GM12878 (cell line): ENCODE measurements at regions of chr7 and their contacts with region 1.

Region 1: DNA sequence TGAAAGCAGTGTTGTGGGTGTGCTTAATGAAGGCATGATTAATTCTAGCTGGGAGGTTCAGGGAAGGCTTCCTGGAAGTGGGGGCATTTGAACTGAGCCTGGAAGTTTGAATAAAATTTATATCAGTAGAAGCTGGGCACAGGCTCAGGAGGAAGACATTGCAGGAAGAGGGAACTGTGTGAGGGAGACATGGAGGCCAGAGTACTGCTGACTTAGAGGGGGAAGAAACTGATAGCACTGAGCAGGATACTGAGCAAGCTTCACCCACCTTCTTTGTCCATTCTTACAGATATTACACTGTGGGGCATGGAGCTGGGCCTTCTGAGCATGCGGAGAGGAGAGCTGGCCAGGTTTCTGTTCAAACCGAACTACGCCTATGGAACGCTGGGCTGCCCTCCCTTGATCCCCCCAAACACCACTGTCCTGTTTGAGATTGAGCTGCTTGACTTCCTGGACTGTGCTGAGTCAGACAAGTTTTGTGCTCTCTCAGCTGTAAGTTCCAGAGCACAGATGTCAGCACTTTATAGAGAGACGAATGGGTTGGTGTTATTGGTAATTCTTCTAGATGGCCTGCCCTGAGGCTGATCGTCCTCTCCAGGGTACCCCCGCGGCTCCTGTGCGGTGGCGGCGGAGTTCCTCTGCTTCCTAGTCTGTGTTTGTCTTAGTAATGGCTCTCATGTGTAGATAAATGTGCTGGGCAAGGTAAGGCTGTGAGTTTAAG is 2.1 kb downstream of the FKBP6 start:
- DNase-seq: no peak
- ATAC-seq: no peak
- H3K4me3 ChIP-seq: no peak overlapping the region
- H3K27ac ChIP-seq: no peak overlapping the region
- H3K4me1 ChIP-seq: no peaks in the 10 kb centered on the region
- H3K27me3 ChIP-seq: peaks cover 0 to 3% of the 10 kb centered on the region in 2 experiments; a peak in 2 of 4 replicates
- CTCF ChIP-seq: no peak
- EP300 ChIP-seq: no peak
- POLR2A ChIP-seq: no peak
- RAD21 ChIP-seq: no peak

Region 2: DNA sequence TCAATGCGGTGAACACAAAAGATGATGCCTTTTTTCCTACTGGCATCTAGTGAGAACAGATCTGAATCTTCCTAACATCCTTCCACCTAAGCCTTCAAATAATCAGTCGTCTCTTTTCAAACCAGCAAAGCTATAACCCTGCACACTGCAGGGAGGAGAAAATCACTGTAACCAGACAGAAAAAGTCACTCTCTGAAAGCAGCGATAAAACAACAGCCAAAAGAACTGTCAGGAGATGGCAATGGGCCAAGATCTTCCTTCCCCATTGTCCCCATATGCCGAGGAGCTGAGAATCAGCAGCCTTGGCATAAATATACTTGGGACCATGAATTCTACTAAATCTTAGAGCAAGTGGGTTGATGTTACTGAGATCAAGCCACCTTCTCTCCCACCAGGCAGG is 116.7 kb after region 1 on chr7:
- CTCF ChIA-PET with region 1: interaction called, 33 read pairs
- POLR2A ChIA-PET with region 1: no interaction called
- RAD21 ChIA-PET with region 1: interaction called, 3 read pairs
- SMC1A ChIA-PET with region 1: interaction called, 15 read pairs
- in situ Hi-C with region 1: no loop called
- intact Hi-C with region 1: no loop called
- DNase-seq: no peak
- ATAC-seq: no peak
- H3K4me3 ChIP-seq: no peak overlapping the region
- H3K27ac ChIP-seq: no peak overlapping the region
- H3K4me1 ChIP-seq: no peaks in the 10 kb centered on the region
- H3K27me3 ChIP-seq: no peaks in the 10 kb centered on the region
- CTCF ChIP-seq: no peak
- EP300 ChIP-seq: no peak
- POLR2A ChIP-seq: no peak
- RAD21 ChIP-seq: no peak

Region 3: DNA sequence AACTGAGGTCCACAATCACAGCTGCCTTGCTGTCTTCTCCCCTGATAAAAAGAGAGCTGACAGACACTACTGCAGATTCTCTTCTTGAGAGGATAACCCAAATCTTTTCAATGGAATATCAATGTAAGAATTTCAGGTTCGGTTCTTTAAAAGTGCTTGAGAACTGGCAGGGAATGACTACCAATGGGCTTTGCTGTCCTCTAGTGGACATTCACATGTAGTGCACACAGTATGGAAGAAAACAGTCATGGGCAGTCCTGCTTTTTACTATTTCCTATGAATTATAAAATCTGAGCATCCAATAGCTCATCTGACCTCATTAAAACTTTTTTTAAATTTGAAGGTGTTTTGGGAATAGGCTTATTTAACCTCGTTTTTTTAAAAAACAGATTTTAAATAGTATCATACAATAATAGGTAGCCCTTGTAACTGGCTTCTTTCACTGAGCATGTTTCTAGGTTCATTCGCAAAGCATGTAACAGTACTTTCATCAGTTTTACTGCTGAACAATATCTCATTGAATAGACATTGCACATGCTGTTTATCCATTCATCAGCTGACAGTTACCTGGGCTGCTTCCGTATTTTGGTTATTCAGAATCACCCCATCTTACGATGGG is 121.9 kb after region 1 on chr7:
- CTCF ChIA-PET with region 1: interaction called, 33 read pairs
- POLR2A ChIA-PET with region 1: no interaction called
- RAD21 ChIA-PET with region 1: interaction called, 3 read pairs
- SMC1A ChIA-PET with region 1: interaction called, 15 read pairs
- in situ Hi-C with region 1: no loop called
- intact Hi-C with region 1: no loop called
- DNase-seq: peak; percentile 9
- ATAC-seq: peak; percentile 83
- H3K4me3 ChIP-seq: no peak overlapping the region
- H3K27ac ChIP-seq: no peak overlapping the region
- H3K4me1 ChIP-seq: no peaks in the 10 kb centered on the region
- H3K27me3 ChIP-seq: no peaks in the 10 kb centered on the region
- CTCF ChIP-seq: peak; percentile 97 to 98 (median 97)
- EP300 ChIP-seq: no peak
- POLR2A ChIP-seq: no peak
- RAD21 ChIP-seq: peak; percentile 96